HCT116 (cell line): ENCODE measurements at regions of chr14 and their contacts with region 1.

Region 1: DNA sequence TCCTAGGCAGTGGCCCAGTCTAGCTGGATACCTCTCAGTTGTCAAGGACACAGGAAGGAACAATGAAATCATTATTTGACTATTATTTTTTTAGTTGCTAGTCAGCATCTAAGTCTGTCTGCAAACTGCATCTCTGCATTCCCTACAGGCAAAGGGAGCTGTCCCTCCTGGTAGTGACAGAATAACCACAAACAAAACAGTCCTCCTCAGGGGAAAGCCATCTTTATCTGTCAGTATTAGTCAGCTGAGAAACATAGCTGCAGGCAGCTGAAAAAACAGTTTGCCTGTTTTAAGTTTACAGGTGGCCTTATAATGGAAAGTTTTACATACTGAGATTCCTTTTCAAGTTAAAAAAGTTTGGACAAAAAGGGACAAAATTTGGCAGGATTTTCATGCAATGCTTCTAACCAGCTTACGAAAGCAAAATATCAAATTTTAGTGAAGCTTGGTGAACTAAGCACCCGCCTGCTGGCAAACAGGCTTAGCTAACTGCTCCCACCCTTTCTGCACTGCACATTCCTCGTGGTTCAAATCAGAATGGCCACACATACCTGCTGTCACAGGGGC is 29.5 kb downstream of the SLC25A21 start:
- DNase-seq: no peak
- ATAC-seq: no peak
- H3K4me3 ChIP-seq: no peak overlapping the region
- H3K27ac ChIP-seq: no peak overlapping the region
- H3K4me1 ChIP-seq: no peaks in the 10 kb centered on the region
- H3K27me3 ChIP-seq: no peaks in the 10 kb centered on the region
- CTCF ChIP-seq: no peak
- POLR2A ChIP-seq: no peak
- RAD21 ChIP-seq: no peak

Region 2: DNA sequence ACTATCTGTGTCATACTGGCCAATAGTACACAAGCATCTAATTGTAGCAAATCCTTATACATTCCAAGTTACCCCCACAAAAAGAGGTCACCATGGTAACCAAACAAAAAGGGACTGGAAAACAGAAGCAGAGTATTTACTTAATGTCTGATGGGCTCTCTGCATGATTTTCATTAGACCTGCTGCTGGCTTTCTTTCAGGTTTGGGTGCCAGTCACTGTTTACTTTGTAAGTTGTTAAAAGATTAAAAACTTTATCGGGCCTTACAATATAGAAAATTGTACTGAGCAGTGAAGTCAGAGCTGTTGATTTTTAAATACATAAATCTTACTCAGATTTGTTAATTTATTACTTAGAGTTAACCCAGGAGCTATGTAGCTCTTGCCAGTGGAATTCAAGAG is 1192.9 kb before region 1 on chr14:
- CTCF ChIA-PET with region 1: no interaction called
- POLR2A ChIA-PET with region 1: no interaction called
- RAD21 ChIA-PET with region 1: no interaction called
- intact Hi-C with region 1: loop called (anchors 10 kb)
- DNase-seq: no peak
- ATAC-seq: no peak
- H3K4me3 ChIP-seq: no peak overlapping the region
- H3K27ac ChIP-seq: no peak overlapping the region
- H3K4me1 ChIP-seq: 0 out of 4 replicates have a peak, but pooled peaks cover 0 to under 1% of the 10 kb centered on the region in 2 experiments
- H3K27me3 ChIP-seq: no peaks in the 10 kb centered on the region
- CTCF ChIP-seq: no peak
- POLR2A ChIP-seq: no peak
- RAD21 ChIP-seq: no peak